ENCODE measurements at regions of chr19 and their contacts with region 1.

Region 1: DNA sequence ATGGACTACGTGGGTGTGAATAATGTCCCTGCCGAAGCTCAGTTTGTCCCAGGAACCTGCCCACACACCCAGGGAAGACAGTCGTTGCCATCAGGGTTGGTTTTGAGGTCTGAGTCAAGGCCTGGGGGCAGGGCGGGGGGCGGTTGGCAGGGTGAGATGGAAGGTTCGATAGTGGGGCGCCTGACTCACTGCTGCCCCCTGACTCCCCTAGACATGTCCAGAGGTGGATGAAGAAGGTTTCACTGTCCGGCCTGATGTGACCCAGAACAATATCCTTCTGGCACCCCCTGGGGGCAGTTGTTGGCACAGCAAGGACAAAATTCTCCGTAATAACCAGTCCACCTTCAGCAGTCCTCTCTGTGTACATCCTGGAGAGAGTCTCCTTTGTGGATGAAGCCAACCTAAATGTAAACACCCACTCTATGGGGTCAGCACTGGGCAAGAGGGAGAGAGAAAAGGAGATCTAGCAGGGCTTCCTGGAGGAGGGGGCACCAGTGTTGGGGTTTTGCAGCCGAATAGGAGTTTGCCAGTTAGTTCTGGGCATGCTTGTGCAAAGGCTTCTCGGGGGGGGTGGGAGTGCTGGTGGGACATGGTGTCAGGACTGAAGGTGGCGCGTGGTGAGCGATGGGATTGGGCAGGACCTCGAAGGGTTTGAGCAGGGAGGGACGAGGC is 19.6 kb upstream of the B3GNT3 start:
- DNase-seq: peak in 1 of 2 experiments; percentile 92
- H3K4me3 ChIP-seq: no peak overlapping the region
- H3K27ac ChIP-seq: no peak overlapping the region
- H3K4me1 ChIP-seq: peaks cover 0 to 9% (median 6%) of the 10 kb centered on the region in 4 experiments; a peak in 5 of 7 replicates
- H3K27me3 ChIP-seq: no peaks in the 10 kb centered on the region
- CTCF ChIP-seq: peak; percentile 62 to 90 (median 87)
- EP300 ChIP-seq: no peak
- POLR2A ChIP-seq: no peak
- RAD21 ChIP-seq: peak; percentile 55 to 76

Region 2: DNA sequence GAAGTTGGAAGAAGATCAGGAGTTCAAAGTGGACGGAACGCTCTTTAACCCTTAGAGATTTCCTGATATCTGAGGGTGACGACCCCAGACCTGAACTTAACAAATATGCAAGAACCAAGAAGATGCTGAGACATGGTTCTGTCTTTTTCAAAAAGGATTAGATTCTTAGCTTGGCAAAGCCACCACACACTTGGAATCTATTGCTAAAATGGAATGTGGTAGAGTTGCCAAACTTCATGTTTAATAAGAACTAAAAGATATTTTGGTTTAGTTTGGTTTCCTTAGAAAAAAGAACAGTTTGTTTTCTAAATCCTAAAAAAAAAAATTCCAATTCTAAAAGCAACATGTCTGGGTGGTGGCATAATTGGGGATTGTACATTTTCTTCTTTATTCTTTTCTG is 116.7 kb before region 1 on chr19:
- CTCF ChIA-PET with region 1: no interaction called
- POLR2A ChIA-PET with region 1: no interaction called
- DNase-seq: no peak
- H3K4me3 ChIP-seq: no peak overlapping the region
- H3K27ac ChIP-seq: no peak overlapping the region
- H3K4me1 ChIP-seq: peaks cover 0 to 5% (median 3%) of the 10 kb centered on the region in 4 experiments; a peak in 3 of 7 replicates
- H3K27me3 ChIP-seq: no peaks in the 10 kb centered on the region
- CTCF ChIP-seq: no peak
- EP300 ChIP-seq: no peak
- POLR2A ChIP-seq: no peak
- RAD21 ChIP-seq: no peak

Region 3: GRCh38 chr19:17687857-17688784 is 87.3 kb before region 1 on chr19 and contains the start of gene UNC13A:
- CTCF ChIA-PET with region 1: interaction called, 14 read pairs
- POLR2A ChIA-PET with region 1: no interaction called
- DNase-seq: peak in 1 of 2 experiments; percentile 98
- H3K4me3 ChIP-seq: peak within 1 kb of the TSS; percentile 72 to 97 (median 84)
- H3K27ac ChIP-seq: no peak within 1 kb of the TSS
- H3K4me1 ChIP-seq: peaks cover 5 to 15% (median 11%) of the 10 kb centered on the region in 4 experiments
- H3K27me3 ChIP-seq: no peaks in the 10 kb centered on the region
- CTCF ChIP-seq: no peak; a peak in 1 of 4 replicates
- EP300 ChIP-seq: no peak; a peak in 1 of 3 replicates
- POLR2A ChIP-seq: 0 out of 3 replicates have a peak, but pooled peaks of 1 of the 2 experiments have one; percentile 19
- RAD21 ChIP-seq: no peak; a peak in 1 of 4 replicates
- total RNA-seq, gene UNC13A: 45.0 and 47.6 TPM in 2 replicates

Region 4: GRCh38 chr19:17725422-17726078 is 49.8 kb before region 1 on chr19:
- CTCF ChIA-PET with region 1: interaction called, 22 read pairs
- POLR2A ChIA-PET with region 1: interaction called, 3 read pairs
- DNase-seq: peak in 1 of 2 experiments; percentile 86
- H3K4me3 ChIP-seq: no peak overlapping the region
- H3K27ac ChIP-seq: no peak overlapping the region
- H3K4me1 ChIP-seq: peaks cover 0 to 1% (median under 1%) of the 10 kb centered on the region in 4 experiments; a peak in 3 of 7 replicates
- H3K27me3 ChIP-seq: no peaks in the 10 kb centered on the region
- CTCF ChIP-seq: peak; percentile 85 to 89 (median 89)
- EP300 ChIP-seq: no peak
- POLR2A ChIP-seq: no peak
- RAD21 ChIP-seq: peak; percentile 73 to 88